ENCODE measurements at regions of chr12 and their contacts with region 1.

Region 1: GRCh38 chr12:47715393-47715876 is 9.6 kb upstream of the RPAP3 start:
- DNase-seq: peak; percentile 85
- H3K4me3 Mint-ChIP-seq: no peak overlapping the region
- H3K27ac Mint-ChIP-seq: peak overlapping the region; percentile 47
- H3K4me1 Mint-ChIP-seq: peaks cover 16% of the 10 kb centered on the region
- H3K27me3 Mint-ChIP-seq: no peaks in the 10 kb centered on the region

Region 2: GRCh38 chr12:47758834-47759690 is 43.6 kb after region 1 on chr12 and contains the start of gene RAPGEF3:
- CTCF ChIA-PET with region 1: interaction called, 28 read pairs
- POLR2A ChIA-PET with region 1: no interaction called
- intact Hi-C with region 1: no loop called
- DNase-seq: peak; percentile 86
- H3K4me3 Mint-ChIP-seq: peak within 1 kb of the TSS; percentile 68
- H3K27ac Mint-ChIP-seq: no peak within 1 kb of the TSS
- H3K4me1 Mint-ChIP-seq: peaks cover 46% of the 10 kb centered on the region
- H3K27me3 Mint-ChIP-seq: no peaks in the 10 kb centered on the region
- total RNA-seq, gene RAPGEF3: 2.1 to 2.5 TPM

Region 3: DNA sequence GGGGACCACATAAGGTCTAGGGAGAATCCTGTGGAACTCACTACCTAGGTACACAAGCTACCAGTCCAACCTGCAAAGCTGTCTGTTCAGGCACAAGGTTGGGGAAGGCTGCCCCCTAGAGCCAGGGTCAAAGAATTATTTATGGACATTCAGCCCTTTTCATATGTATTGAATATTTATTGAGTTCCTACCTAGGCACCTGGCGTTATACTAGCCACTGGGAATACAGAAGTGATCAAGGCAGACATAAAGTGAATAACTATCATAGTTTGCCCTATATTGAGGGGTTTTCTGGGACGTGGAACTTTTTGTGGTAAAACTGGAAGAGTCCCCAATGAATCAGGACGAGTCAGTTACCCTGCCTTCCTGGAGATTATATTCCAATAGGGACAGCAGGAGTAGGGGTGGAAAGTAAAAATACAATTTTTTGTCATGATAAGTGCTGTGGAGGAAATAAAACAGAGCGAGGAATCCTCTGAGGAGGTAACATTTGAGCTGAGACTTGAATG is 51.8 kb after region 1 on chr12:
- CTCF ChIA-PET with region 1: interaction called, 117 read pairs
- POLR2A ChIA-PET with region 1: no interaction called
- intact Hi-C with region 1: loop called (anchors 1 kb)
- DNase-seq: peak; percentile 86
- H3K4me3 Mint-ChIP-seq: no peak overlapping the region
- H3K27ac Mint-ChIP-seq: no peak overlapping the region
- H3K4me1 Mint-ChIP-seq: no peaks in the 10 kb centered on the region
- H3K27me3 Mint-ChIP-seq: no peaks in the 10 kb centered on the region

Region 4: GRCh38 chr12:47773062-47773857 is 57.8 kb after region 1 on chr12 and contains the start of gene SLC48A1:
- CTCF ChIA-PET with region 1: interaction called, 117 read pairs
- POLR2A ChIA-PET with region 1: no interaction called
- intact Hi-C with region 1: no loop called
- DNase-seq: peak; percentile 80
- H3K4me3 Mint-ChIP-seq: peak within 1 kb of the TSS; percentile 85
- H3K27ac Mint-ChIP-seq: no peak within 1 kb of the TSS
- H3K4me1 Mint-ChIP-seq: peaks cover 18% of the 10 kb centered on the region
- H3K27me3 Mint-ChIP-seq: no peaks in the 10 kb centered on the region
- total RNA-seq, gene SLC48A1: 13.7 to 16.2 TPM

Region 5: GRCh38 chr12:47779301-47779942 is 64.0 kb after region 1 on chr12:
- CTCF ChIA-PET with region 1: interaction called, 14 read pairs
- POLR2A ChIA-PET with region 1: interaction called, 4 read pairs
- intact Hi-C with region 1: loop called (anchors 1 kb)
- DNase-seq: peak; percentile 95
- H3K4me3 Mint-ChIP-seq: no peak overlapping the region
- H3K27ac Mint-ChIP-seq: no peak overlapping the region
- H3K4me1 Mint-ChIP-seq: peaks cover 17% of the 10 kb centered on the region
- H3K27me3 Mint-ChIP-seq: no peaks in the 10 kb centered on the region

Region 6: GRCh38 chr12:47828608-47829536 is 113.4 kb after region 1 on chr12:
- CTCF ChIA-PET with region 1: interaction called, 19 read pairs
- POLR2A ChIA-PET with region 1: interaction called, 3 read pairs
- intact Hi-C with region 1: no loop called
- DNase-seq: peak; percentile 55
- H3K4me3 Mint-ChIP-seq: peak overlapping the region; percentile 60
- H3K27ac Mint-ChIP-seq: peak overlapping the region; percentile 81
- H3K4me1 Mint-ChIP-seq: peaks cover 89% of the 10 kb centered on the region
- H3K27me3 Mint-ChIP-seq: no peaks in the 10 kb centered on the region

Region 7: GRCh38 chr12:48157018-48157888 is 441.8 kb after region 1 on chr12 and contains the start of gene ASB8:
- CTCF ChIA-PET with region 1: no interaction called
- POLR2A ChIA-PET with region 1: no interaction called
- intact Hi-C with region 1: loop called (anchors 1 kb)
- DNase-seq: peak; percentile 100
- H3K4me3 Mint-ChIP-seq: peak within 1 kb of the TSS; percentile 94
- H3K27ac Mint-ChIP-seq: peak within 1 kb of the TSS; percentile 96
- H3K4me1 Mint-ChIP-seq: peaks cover 37% of the 10 kb centered on the region
- H3K27me3 Mint-ChIP-seq: no peaks in the 10 kb centered on the region
- total RNA-seq, gene ASB8: 31.4 to 33.6 TPM